SK-N-SH (cell line): ENCODE measurements at regions of chr2 and their contacts with region 1.

Region 1: GRCh38 chr2:200703127-200703925 is 108.4 kb upstream of the BZW1 start:
- DNase-seq: peak; percentile 15
- H3K4me3 ChIP-seq: no peak overlapping the region
- H3K27ac ChIP-seq: no peak overlapping the region
- H3K4me1 ChIP-seq: no peaks in the 10 kb centered on the region; a peak in 2 of 4 replicates
- H3K27me3 ChIP-seq: no peaks in the 10 kb centered on the region
- CTCF ChIP-seq: peak; percentile 75
- EP300 ChIP-seq: no peak
- RAD21 ChIP-seq: peak; percentile 93

Region 2: DNA sequence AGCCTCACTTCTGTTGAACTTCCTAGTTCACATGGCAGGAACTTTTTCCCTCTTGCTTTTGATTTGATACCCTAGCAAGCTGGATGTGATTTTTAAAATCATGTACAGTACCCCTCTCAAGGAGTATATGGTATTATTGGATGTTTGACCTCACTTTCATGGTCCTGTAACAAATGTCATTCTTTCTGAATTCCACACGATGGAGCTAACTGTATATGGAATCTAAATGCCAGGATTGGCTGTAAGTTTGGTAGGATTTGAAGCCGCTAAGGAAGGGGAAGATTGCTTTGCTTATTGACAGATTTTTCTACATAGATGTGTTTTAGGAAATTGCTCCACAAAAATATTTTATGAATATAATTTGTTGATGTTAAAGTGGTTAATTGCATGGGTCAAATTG is 729.6 kb before region 1 on chr2:
- CTCF ChIA-PET with region 1: interaction called, 17 read pairs
- POLR2A ChIA-PET with region 1: no interaction called
- DNase-seq: peak; percentile 40
- H3K4me3 ChIP-seq: no peak overlapping the region
- H3K27ac ChIP-seq: no peak overlapping the region
- H3K4me1 ChIP-seq: peaks cover 3 to 7% of the 10 kb centered on the region in 2 experiments; a peak in 2 of 4 replicates
- H3K27me3 ChIP-seq: no peaks in the 10 kb centered on the region
- CTCF ChIP-seq: peak; percentile 72
- EP300 ChIP-seq: no peak
- RAD21 ChIP-seq: peak; percentile 91

Region 3: DNA sequence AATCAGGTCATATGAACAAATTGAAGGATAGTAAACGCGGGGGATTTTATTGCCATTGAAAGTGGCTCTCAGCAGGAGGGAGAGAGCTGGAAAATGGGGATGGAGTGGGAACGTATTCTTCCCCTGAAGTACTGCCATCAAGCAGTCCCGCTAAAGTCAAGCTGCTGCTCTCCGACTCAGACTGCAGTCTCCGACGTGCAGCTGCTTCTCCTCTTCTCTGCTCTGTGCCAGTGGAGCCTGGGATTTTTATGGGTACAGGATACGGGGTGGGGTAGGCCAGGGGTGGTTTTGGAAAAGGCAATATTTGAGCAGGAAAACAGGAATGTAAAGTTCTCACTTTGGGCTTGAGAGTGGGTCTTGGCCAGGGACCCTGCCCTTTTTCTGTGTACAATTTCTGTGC is 226.5 kb before region 1 on chr2:
- CTCF ChIA-PET with region 1: interaction called, 10 read pairs
- POLR2A ChIA-PET with region 1: no interaction called
- DNase-seq: no peak
- H3K4me3 ChIP-seq: no peak overlapping the region
- H3K27ac ChIP-seq: no peak overlapping the region
- H3K4me1 ChIP-seq: peaks cover 1 to 18% of the 10 kb centered on the region in 2 experiments; a peak in 3 of 4 replicates
- H3K27me3 ChIP-seq: no peaks in the 10 kb centered on the region
- CTCF ChIP-seq: no peak
- EP300 ChIP-seq: no peak
- RAD21 ChIP-seq: no peak

Region 4: DNA sequence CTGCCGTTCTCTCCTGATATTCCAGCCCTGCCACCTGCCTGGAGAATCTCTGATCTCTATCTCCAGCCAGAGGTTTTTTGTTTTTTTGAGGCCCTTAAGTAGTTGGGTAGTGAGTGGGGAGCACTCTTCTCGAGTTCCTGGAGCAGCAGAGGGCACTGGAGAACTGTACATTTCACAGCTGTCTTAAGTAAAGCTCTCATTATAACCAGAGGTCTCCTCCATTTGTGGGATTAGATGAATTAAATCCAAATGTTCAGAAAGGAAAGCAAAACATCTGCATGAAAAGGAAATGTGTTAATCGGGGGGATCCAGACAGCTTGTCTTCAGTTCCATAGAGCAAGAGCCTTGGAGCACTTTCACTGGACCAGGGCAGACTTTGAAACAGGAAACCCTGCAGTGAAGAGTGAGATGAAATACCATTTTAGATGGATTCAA is 84.7 kb before region 1 on chr2:
- CTCF ChIA-PET with region 1: interaction called, 17 read pairs
- POLR2A ChIA-PET with region 1: no interaction called
- DNase-seq: peak; percentile 31
- H3K4me3 ChIP-seq: no peak overlapping the region
- H3K27ac ChIP-seq: peak overlapping the region in 1 of 2 experiments; percentile 47; a peak in 2 of 4 replicates
- H3K4me1 ChIP-seq: peaks cover 14 to 17% of the 10 kb centered on the region in 2 experiments
- H3K27me3 ChIP-seq: no peaks in the 10 kb centered on the region
- CTCF ChIP-seq: peak; percentile 43
- EP300 ChIP-seq: no peak
- RAD21 ChIP-seq: peak; percentile 71

Region 5: GRCh38 chr2:200747668-200748618 is 44.6 kb after region 1 on chr2:
- CTCF ChIA-PET with region 1: no interaction called
- POLR2A ChIA-PET with region 1: no interaction called
- DNase-seq: no peak
- H3K4me3 ChIP-seq: no peak overlapping the region
- H3K27ac ChIP-seq: no peak overlapping the region
- H3K4me1 ChIP-seq: peaks cover 0 to 10% of the 10 kb centered on the region in 2 experiments; a peak in 1 of 4 replicates
- H3K27me3 ChIP-seq: no peaks in the 10 kb centered on the region
- CTCF ChIP-seq: no peak
- EP300 ChIP-seq: no peak
- RAD21 ChIP-seq: no peak

Region 6: GRCh38 chr2:200913654-200914053 is 210.3 kb after region 1 on chr2:
- CTCF ChIA-PET with region 1: no interaction called
- POLR2A ChIA-PET with region 1: no interaction called
- DNase-seq: no peak
- H3K4me3 ChIP-seq: no peak overlapping the region
- H3K27ac ChIP-seq: peak overlapping the region in 1 of 2 experiments; percentile 27; a peak in 1 of 4 replicates
- H3K4me1 ChIP-seq: no peaks in the 10 kb centered on the region
- H3K27me3 ChIP-seq: no peaks in the 10 kb centered on the region
- CTCF ChIP-seq: no peak
- EP300 ChIP-seq: no peak
- RAD21 ChIP-seq: no peak

Region 7: GRCh38 chr2:200975672-200976071 is 272.3 kb after region 1 on chr2:
- CTCF ChIA-PET with region 1: no interaction called
- POLR2A ChIA-PET with region 1: no interaction called
- DNase-seq: no peak
- H3K4me3 ChIP-seq: no peak overlapping the region
- H3K27ac ChIP-seq: no peak overlapping the region
- H3K4me1 ChIP-seq: no peaks in the 10 kb centered on the region
- H3K27me3 ChIP-seq: no peaks in the 10 kb centered on the region
- CTCF ChIP-seq: no peak
- EP300 ChIP-seq: no peak
- RAD21 ChIP-seq: no peak